ENCODE measurements at regions of chr2 and their contacts with region 1.

Region 1: DNA sequence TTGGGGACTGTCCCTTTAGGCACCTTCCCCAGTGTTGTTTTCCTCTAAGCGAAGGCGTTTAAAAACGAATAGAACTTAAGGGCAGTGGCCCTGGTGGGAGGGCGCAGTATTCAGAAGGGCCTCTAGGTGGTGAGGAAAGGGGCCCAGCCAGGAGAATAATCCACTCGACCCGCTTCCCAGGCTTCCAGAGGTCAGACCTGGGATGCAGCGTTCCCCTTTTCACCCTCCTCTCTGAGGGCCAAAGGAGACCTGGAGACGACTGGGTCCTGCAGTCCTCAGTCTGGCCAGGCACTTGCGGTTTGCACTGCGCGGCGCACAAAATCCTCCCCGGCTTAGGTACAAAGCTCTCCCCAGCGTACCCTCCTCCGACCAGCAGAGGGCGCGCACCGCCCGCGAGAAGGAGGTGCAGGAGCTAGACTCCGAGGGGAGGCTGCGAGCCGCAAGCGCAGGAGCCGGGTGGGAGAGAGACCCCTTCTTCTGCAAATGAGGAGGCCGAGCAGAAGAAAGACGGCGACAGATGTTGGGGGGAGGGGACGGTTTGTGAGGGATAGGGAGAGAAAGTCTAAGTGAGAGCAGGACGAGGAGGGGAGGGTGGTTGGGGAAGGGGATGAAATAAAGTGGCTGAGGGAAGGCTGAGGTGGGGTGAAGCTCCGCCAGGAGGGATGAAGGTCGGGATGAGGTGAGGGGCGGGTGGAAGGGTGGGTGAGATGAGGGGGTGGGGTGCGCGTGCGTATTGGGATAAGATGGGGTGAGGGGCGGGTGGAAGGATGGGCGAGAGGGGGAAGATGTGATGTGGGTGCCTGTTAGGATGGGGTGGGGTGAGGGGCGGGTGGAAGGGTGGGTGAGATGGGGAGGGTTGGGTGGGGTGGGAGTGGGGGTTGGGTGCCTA is 4.9 kb downstream of the FEV start:
- DNase-seq: peak; percentile 93
- ATAC-seq: peak; percentile 90
- H3K4me3 Mint-ChIP-seq: peak overlapping the region; percentile 43
- H3K27ac Mint-ChIP-seq: no peak overlapping the region
- H3K4me1 Mint-ChIP-seq: peaks cover 28% of the 10 kb centered on the region
- H3K27me3 Mint-ChIP-seq: peaks cover 56% of the 10 kb centered on the region

Region 2: DNA sequence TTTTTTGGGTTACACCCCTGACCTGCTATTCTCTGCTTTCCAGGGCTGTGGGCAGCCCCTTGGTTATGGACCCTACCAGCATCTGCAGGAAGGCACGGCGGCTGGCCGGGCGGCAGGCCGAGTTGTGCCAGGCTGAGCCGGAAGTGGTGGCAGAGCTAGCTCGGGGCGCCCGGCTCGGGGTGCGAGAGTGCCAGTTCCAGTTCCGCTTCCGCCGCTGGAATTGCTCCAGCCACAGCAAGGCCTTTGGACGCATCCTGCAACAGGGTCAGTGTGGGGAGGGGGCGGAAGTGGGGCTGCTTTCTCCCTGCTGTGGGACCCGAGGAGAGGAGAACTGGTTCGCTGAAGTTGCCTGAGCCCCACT is 109.1 kb before region 1 on chr2:
- CTCF ChIA-PET with region 1: interaction called, 16 read pairs
- POLR2A ChIA-PET with region 1: no interaction called
- intact Hi-C with region 1: loop called (anchors 2 to 5 kb)
- DNase-seq: no peak
- ATAC-seq: no peak
- H3K4me3 Mint-ChIP-seq: peak overlapping the region; percentile 44
- H3K27ac Mint-ChIP-seq: no peak overlapping the region
- H3K4me1 Mint-ChIP-seq: peaks cover 17% of the 10 kb centered on the region
- H3K27me3 Mint-ChIP-seq: peaks cover 53% of the 10 kb centered on the region

Region 3: GRCh38 chr2:218959141-218959731 is 20.9 kb before region 1 on chr2 and contains the start of gene CDK5R2:
- CTCF ChIA-PET with region 1: interaction called, 10 read pairs
- POLR2A ChIA-PET with region 1: no interaction called
- intact Hi-C with region 1: loop called in 1 of 2 experiments (anchors 1 kb)
- DNase-seq: peak; percentile 89
- ATAC-seq: peak; percentile 98
- H3K4me3 Mint-ChIP-seq: peak within 1 kb of the TSS; percentile 43
- H3K27ac Mint-ChIP-seq: no peak within 1 kb of the TSS
- H3K4me1 Mint-ChIP-seq: peaks cover 11% of the 10 kb centered on the region
- H3K27me3 Mint-ChIP-seq: peaks cover 68% of the 10 kb centered on the region
- total RNA-seq, gene CDK5R2: not detected

Region 4: GRCh38 chr2:219029829-219030165 is 49.7 kb after region 1 on chr2:
- CTCF ChIA-PET with region 1: interaction called, 8 read pairs
- POLR2A ChIA-PET with region 1: no interaction called
- intact Hi-C with region 1: loop called in 1 of 2 experiments (anchors 1 kb)
- DNase-seq: peak; percentile 88
- ATAC-seq: peak; percentile 98
- H3K4me3 Mint-ChIP-seq: no peak overlapping the region
- H3K27ac Mint-ChIP-seq: no peak overlapping the region
- H3K4me1 Mint-ChIP-seq: no peaks in the 10 kb centered on the region
- H3K27me3 Mint-ChIP-seq: peaks cover 11% of the 10 kb centered on the region

Region 5: DNA sequence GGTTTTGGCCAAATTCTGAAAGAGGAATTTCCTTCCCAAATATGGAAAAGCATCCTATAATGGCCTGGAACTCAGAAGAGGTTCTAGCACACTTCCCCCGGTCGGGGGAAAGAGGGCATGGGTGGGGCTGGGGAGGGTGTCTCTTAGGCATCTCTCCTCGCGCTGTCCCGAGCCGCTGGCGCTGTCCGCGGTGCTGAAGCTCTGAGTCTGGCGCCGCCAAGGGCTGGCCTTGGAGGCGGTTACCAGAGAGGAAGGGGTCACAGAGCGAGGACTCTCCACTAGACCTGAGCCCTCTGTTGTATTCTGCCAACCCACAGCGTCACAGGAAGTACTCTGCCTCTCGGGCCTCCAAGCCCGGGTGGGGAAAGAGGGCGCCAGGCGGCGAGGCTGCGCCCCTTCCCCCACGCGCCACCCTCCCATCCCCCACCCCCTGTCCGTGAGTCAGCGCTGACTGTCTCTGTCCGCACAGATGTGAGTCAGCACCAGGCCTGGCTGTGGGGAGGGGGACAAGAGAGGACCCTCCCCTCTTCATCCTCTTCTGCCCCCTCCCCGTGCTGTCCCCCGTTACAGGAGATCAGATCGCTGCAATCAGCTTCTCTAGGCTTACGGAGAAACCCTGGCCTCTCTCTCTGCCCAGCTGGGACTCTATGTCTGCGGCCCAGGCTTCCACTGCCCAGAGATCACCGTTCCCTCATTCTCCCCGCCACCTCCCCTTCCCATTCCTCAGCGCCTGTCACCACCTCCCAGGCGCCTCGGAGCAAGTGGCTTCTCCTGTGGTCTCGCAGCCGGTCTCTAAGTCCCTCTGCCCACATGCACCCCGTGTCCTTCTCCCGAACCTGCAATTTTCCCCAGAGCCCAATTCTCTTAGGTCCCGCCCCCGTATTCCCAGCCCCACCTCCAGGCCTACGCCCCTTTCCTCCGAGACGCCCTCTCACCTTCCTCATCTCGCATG is 328.3 kb after region 1 on chr2:
- CTCF ChIA-PET with region 1: interaction called, 3 read pairs
- POLR2A ChIA-PET with region 1: no interaction called
- intact Hi-C with region 1: loop called in 1 of 2 experiments (anchors 10 kb)
- DNase-seq: peak; percentile 87
- ATAC-seq: peak; percentile 92
- H3K4me3 Mint-ChIP-seq: no peak overlapping the region
- H3K27ac Mint-ChIP-seq: no peak overlapping the region
- H3K4me1 Mint-ChIP-seq: peaks cover 7% of the 10 kb centered on the region
- H3K27me3 Mint-ChIP-seq: peaks cover 38% of the 10 kb centered on the region